Lower lobe of right lung (tissue), 2 donors: ENCODE measurements at regions of chr12 and their contacts with region 1.

Region 1: DNA sequence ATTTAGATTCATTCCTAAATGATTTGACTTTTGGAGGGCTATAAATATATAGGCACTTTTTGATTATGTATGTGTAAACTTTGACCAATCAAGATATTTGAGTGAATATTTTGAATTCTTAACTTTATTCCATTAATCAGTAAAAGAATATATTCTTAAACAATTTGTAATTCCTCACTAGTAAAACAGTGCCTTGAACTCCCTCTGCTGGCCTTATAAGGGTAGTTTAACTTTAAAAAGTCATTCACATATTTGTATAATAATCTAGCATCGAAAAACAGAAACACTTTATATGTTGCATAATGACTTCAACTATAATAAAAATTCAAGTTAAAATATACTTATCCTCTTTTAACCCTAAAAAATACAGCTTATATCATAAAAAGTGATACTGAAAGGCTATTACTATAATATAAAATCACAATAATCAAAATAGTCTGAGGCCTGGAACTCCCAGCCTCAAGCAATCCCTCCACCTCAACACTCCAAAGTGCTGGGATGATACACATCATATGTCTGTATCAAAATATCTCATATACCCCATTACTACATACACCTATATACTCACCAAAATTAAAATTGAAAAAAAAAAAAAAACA is 31.2 kb downstream of the CCDC59 start:
- DNase-seq: no peak
- ATAC-seq: no peak
- H3K4me3 ChIP-seq: no peak overlapping the region
- H3K27ac ChIP-seq: no peak overlapping the region
- H3K4me1 ChIP-seq: no peaks in the 10 kb centered on the region
- H3K27me3 ChIP-seq: no peaks in the 10 kb centered on the region
- CTCF ChIP-seq: peak; percentile 42

Region 2: DNA sequence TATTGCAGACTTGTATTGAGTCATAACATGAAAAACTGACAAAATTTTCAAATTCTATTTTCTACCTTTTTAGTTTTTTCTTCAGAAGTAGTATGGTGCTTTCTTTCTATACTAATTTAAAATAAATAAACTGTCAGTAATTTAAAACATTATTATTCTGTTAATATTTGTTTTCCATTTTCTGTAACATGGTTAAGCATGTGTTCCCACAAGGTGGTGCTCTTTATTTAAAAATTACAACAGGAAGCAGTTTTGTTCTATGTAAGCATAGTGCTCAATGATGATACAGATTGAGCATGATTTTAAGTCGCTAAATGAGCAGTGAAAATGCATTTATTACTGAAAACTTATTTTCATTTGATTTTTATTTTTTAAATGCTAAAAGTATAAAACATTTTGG is 682.5 kb before region 1 on chr12:
- intact Hi-C with region 1: loop called (anchors 10 kb)
- DNase-seq: no peak
- ATAC-seq: no peak
- H3K4me3 ChIP-seq: no peak overlapping the region
- H3K27ac ChIP-seq: no peak overlapping the region
- H3K4me1 ChIP-seq: no peaks in the 10 kb centered on the region
- H3K27me3 ChIP-seq: no peaks in the 10 kb centered on the region
- CTCF ChIP-seq: peak; percentile 58

Region 3: GRCh38 chr12:82223426-82223825 is 103.6 kb before region 1 on chr12:
- intact Hi-C with region 1: no loop called
- DNase-seq: no peak
- ATAC-seq: no peak
- H3K4me3 ChIP-seq: no peak overlapping the region
- H3K27ac ChIP-seq: no peak overlapping the region
- H3K4me1 ChIP-seq: no peaks in the 10 kb centered on the region
- H3K27me3 ChIP-seq: no peaks in the 10 kb centered on the region
- CTCF ChIP-seq: no peak